Activated naive CD4-positive, alpha-beta T cell treated with anti-CD3 and anti-CD28 coated beads, Interleukin-2, amount 10 ng/mL, durations not matched to agents 7 days and 5 days (primary cell): ENCODE measurements at regions of chr16 and their contacts with region 1.

Region 1: DNA sequence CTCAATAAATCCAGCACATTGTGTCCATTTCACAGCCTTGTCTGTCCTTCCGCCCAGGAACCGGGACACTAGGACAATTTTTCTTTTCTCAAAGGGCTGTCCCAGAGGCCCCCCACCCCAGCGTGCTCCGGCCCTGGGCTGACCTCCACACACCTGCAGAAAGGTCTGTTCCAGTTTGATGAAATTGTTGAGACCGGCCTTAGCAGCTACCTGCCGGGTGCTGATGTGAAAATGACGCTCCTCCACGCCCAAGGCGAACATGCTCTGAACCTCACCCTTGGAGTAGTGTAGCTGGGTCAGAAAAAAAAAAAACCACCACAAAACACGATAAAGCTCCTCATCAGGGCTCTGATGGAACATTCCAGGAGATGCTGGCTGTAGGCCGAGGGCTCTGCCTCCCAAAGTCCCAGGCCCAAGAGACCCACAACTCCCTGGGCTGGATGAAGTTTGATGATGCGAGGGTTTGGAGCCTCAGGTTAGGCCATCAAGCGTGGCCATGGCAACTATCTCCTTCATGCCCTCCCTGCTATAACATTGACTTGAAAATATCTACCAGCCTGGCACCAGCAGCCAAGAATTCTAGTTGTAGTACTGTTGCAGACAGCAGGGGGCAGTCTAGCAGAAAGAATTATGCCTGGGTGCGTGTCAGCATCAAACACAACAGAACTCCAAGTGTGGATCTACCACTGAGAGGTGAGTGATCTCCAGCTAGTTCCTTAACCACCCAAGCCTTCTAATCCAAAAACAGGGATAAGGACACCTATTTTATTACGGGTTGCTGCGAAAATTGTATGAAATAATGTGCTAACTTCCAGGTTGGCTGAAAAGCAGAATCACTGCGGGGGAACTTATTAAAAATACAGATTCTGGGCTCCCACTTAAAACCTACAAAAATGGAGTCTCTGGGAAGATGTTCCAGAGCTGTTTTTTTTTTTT is 62.1 kb downstream of the RMI2 start:
- DNase-seq: peak; percentile 77
- H3K4me3 Mint-ChIP-seq: no peak overlapping the region
- H3K27ac Mint-ChIP-seq: no peak overlapping the region
- H3K4me1 Mint-ChIP-seq: peaks cover 4% of the 10 kb centered on the region
- H3K27me3 Mint-ChIP-seq: peaks cover 27% of the 10 kb centered on the region

Region 2: DNA sequence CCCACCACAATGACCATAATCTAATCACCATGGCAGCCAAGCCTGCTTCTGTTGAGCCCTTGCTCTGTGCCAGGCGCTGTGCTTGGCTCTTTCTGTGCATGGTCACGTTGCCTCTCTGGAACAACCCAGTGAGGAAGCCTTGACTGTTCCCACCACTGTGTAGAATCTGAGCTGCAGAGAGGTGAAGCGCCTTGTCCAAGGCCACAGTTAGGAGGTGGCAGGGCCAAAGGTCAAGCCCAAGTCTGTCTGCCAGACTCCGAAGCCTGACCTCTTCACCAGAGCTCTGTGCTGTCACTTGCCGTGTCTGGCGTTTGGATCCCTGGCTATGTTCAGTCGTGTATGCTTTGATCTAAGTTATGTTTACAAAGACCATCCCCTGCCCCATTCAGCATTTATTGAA is 452.4 kb before region 1 on chr16:
- CTCF ChIA-PET with region 1: interaction called, 23 read pairs
- DNase-seq: no peak
- H3K4me3 Mint-ChIP-seq: no peak overlapping the region
- H3K27ac Mint-ChIP-seq: no peak overlapping the region
- H3K4me1 Mint-ChIP-seq: peaks cover 58% of the 10 kb centered on the region
- H3K27me3 Mint-ChIP-seq: no peaks in the 10 kb centered on the region

Region 3: GRCh38 chr16:10971560-10971961 is 435.8 kb before region 1 on chr16:
- CTCF ChIA-PET with region 1: interaction called, 19 read pairs
- DNase-seq: peak; percentile 51
- H3K4me3 Mint-ChIP-seq: no peak overlapping the region
- H3K27ac Mint-ChIP-seq: peak overlapping the region; percentile 35
- H3K4me1 Mint-ChIP-seq: peaks cover 77% of the 10 kb centered on the region
- H3K27me3 Mint-ChIP-seq: no peaks in the 10 kb centered on the region

Region 4: GRCh38 chr16:11105038-11105903 is 302.0 kb before region 1 on chr16:
- CTCF ChIA-PET with region 1: no interaction called
- DNase-seq: peak; percentile 54
- H3K4me3 Mint-ChIP-seq: peak overlapping the region; percentile 7
- H3K27ac Mint-ChIP-seq: peak overlapping the region; percentile 88
- H3K4me1 Mint-ChIP-seq: peaks cover 72% of the 10 kb centered on the region
- H3K27me3 Mint-ChIP-seq: no peaks in the 10 kb centered on the region

Region 5: GRCh38 chr16:11396241-11397048 is 10.9 kb before region 1 on chr16:
- CTCF ChIA-PET with region 1: interaction called, 35 read pairs
- DNase-seq: peak; percentile 76
- H3K4me3 Mint-ChIP-seq: no peak overlapping the region
- H3K27ac Mint-ChIP-seq: no peak overlapping the region
- H3K4me1 Mint-ChIP-seq: no peaks in the 10 kb centered on the region
- H3K27me3 Mint-ChIP-seq: peaks cover 48% of the 10 kb centered on the region

Region 6: DNA sequence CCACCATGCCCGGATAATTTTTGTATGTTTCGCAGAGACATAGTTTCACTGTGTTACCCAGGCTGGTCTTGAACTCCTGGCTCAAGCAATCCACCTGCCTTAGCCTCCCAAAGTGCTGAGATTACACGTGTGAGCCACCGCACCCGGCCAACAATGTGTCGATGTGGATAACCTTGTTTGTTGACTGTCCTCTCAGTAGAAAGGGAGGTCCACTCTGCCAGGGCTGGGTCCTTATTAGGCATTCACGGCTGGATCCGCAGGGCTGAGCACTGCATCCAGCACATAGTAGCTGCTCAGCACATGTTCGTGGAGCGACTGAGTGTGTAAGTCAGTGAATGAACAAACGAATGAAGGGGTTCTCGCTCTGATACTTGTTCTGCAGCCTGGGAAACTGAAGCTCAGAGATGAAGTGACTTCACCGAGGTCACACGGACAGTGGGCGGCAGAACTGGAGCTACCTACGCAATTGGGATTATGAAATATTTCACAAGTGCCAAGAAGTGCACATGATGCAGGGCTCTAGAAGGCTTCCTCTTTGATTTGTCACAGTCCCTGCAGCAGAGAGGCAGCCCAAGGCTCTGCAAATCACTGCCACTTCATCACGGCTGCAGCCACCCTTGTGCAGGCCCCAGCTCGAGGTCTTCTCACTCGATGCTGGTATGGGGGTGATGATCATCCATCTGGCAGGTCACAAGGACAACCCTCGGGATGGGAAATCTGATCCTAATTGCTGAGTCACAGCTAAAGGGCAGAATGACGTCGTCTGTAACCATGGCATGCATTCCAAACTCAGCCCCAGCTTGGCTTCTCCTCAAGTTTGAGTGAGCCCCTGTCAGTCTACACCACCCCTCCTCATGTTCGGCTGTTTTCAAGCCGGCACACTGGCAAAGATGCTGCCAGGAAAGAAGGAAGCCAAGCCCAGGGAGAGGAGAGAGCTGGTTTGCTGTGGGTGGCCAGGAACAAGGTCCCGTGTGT is 232.9 kb after region 1 on chr16:
- CTCF ChIA-PET with region 1: interaction called, 13 read pairs
- DNase-seq: no peak
- H3K4me3 Mint-ChIP-seq: no peak overlapping the region
- H3K27ac Mint-ChIP-seq: no peak overlapping the region
- H3K4me1 Mint-ChIP-seq: peaks cover 20% of the 10 kb centered on the region
- H3K27me3 Mint-ChIP-seq: peaks cover 43% of the 10 kb centered on the region

Region 7: DNA sequence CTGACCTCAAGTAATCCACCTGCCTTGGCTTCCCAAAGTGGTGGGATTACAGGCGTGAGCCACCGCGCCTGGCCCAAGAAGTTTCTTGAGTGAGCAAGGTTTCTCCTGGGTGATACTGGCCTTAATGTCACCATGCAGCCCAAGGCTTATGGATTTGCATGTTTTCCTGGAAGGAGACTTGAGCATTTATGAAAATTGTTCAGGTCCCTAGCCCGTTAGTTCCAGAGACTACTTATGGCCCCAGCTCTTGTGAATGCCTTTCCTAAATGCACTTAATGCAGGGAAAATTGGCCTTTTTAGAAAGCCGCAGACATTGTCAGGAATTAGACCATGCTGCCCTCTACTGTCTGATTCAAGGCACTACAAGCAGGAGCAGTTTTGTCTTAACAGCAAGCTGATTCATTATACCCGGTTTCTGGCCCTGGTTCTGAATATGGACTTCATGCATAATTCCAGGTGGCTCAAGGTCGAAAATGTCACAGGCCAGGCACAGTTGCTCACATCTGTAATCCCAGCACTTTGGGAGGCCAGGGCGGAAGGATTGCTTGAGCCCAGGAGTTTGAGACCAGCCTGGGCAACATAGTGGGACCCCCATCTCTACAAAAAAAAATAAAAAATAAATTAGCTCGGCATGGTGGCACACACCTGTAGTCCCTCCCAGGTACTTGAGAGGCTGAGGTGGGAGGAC is 660.5 kb after region 1 on chr16:
- CTCF ChIA-PET with region 1: interaction called, 10 read pairs
- DNase-seq: peak; percentile 78
- H3K4me3 Mint-ChIP-seq: no peak overlapping the region
- H3K27ac Mint-ChIP-seq: no peak overlapping the region
- H3K4me1 Mint-ChIP-seq: peaks cover 5% of the 10 kb centered on the region
- H3K27me3 Mint-ChIP-seq: no peaks in the 10 kb centered on the region